Motor neuron (in vitro differentiated cells): ENCODE measurements at regions of chr4 and their contacts with region 1.

Region 1: DNA sequence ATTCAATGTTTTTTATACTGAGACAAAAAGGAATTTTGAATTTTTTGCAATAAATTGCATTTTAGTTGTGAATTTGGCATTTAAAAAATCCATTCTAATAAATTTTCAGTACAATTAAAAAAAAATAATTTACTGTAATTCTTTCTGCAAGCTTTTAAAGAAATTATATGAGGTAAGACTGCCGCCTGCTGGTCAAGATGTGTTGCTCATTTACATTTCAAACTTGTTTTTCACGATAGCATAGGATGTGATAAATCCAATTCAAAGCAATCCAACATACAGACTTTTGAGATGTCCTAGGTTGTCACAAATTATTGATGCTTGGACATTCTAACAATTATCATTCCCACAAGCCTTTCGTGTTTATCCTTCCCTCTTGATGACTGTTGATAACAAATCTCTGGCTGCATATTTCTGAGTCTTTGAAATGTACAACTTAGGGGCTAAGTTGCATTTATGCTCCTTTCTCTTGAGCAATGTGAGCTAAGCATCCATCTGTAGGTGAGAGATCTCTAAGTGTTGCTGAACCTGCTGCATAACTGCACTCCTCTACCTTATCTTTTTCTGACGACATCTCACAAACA is 21.7 kb upstream of the MFAP3L start:
- ATAC-seq: no peak
- H3K4me3 ChIP-seq: no peak overlapping the region
- H3K27ac ChIP-seq: no peak overlapping the region
- H3K4me1 ChIP-seq: no peaks in the 10 kb centered on the region

Region 2: DNA sequence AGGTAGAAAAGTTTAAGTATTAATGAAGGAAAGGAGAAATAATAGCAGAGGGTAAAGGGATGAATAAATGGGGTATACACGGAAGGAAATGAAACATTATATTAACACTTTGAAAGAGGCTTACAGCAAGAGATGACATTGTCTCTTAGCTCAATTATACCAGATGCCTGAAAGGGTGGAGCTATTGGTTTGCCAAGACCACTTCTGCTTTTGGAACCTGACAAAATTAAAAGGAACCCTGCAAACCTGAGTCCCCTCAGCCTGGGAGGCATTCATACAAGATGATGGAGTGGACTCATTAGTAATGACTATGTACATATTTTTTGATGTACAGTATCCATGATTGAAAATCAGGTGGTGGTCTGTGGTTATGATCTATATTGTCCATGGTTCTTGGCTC is 245.0 kb before region 1 on chr4:
- in situ Hi-C with region 1: loop called in 7 of 9 experiments (anchors 10 to 25 kb)
- ATAC-seq: no peak
- H3K4me3 ChIP-seq: no peak overlapping the region
- H3K27ac ChIP-seq: no peak overlapping the region
- H3K4me1 ChIP-seq: peaks cover 0 to 3% of the 10 kb centered on the region in 2 donors

Region 3: GRCh38 chr4:170109586-170110284 is 61.9 kb after region 1 on chr4:
- in situ Hi-C with region 1: no loop called
- ATAC-seq: peak in 7 of 8 experiments; percentile 70 to 93 (median 75)
- H3K4me3 ChIP-seq: no peak overlapping the region
- H3K27ac ChIP-seq: no peak overlapping the region
- H3K4me1 ChIP-seq: peaks cover 11 to 23% of the 10 kb centered on the region in 2 donors